Adrenal gland (tissue), 19 donors: ENCODE measurements at regions of chr5 and their contacts with region 1.

Region 1: DNA sequence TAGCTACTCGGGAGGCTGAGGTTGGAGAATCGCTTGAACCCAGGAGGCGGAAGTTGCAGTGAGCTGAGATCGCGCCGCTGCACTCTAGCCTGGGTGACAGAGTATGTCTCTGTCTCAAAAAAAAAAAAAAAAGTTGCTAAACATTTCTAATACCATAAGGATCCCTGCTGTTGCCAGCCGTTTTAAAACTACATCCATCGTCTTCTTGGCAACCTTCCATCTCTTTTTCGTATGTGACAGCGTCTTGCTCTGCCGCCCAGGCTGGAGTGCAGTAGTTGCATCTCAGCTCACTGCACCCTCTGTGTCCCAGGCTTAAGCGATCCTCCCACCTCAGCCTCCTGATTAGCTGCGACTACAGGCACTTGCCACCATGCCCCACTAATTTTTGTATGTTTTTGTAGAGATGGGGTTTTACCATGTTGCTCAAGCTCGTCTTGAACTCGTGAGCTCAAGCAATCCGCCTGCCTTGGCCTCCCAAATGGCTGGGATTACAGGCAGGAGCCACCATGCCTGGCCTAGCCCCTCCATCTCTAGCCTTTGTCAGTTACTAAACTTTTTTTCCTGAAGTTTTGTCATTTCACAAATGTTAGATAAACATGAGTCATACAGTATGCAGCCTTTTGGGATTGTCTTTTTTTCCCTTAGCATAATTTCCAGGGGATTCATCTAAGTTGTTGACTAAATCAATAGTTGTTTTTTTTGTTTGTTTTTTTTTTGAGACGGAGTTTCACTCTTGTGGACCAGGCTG is 13.5 kb downstream of the NSD1 start:
- DNase-seq: peak in 1 of 7 donors; percentile 49
- H3K4me3 ChIP-seq: no peak overlapping the region
- H3K27ac ChIP-seq: no peak overlapping the region
- H3K4me1 ChIP-seq: peaks cover 0 to 14% of the 10 kb centered on the region in 2 donors
- H3K27me3 ChIP-seq: no peaks in the 10 kb centered on the region
- CTCF ChIP-seq: no peak
- POLR2A ChIP-seq: no peak

Region 2: GRCh38 chr5:176875783-176876505 is 271.1 kb before region 1 on chr5:
- intact Hi-C with region 1: no loop called
- DNase-seq: no peak
- H3K4me3 ChIP-seq: no peak overlapping the region
- H3K27ac ChIP-seq: no peak overlapping the region
- H3K4me1 ChIP-seq: no peaks in the 10 kb centered on the region
- H3K27me3 ChIP-seq: peaks cover 4% of the 10 kb centered on the region
- CTCF ChIP-seq: no peak
- POLR2A ChIP-seq: no peak

Region 3: GRCh38 chr5:177232761-177233160 is 85.7 kb after region 1 on chr5:
- intact Hi-C with region 1: no loop called
- DNase-seq: no peak
- H3K4me3 ChIP-seq: no peak overlapping the region
- H3K27ac ChIP-seq: no peak overlapping the region
- H3K4me1 ChIP-seq: peaks cover 0 to 35% of the 10 kb centered on the region in 2 donors
- H3K27me3 ChIP-seq: no peaks in the 10 kb centered on the region
- CTCF ChIP-seq: no peak
- POLR2A ChIP-seq: no peak

Region 4: DNA sequence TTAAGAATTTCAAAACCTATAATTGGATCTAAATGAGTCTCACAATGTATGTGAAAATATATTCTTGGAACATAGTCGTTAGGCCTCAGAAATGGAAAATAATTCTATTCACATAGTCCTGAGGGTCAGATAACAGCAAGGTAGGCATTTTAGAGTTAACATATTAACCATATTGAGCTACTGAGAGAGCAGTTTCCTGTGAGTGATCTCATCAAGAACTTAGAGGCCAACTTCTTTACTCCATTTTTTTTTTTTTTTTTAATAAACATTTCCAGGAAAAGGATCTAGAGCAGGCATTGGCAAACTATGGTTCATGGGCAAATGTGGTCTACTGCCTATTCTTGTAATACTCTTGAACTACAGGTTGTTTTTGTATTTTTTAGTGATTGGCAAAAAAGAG is 129.8 kb after region 1 on chr5:
- intact Hi-C with region 1: loop called in 1 of 2 experiments (anchors 10 kb)
- DNase-seq: no peak
- H3K4me3 ChIP-seq: no peak overlapping the region
- H3K27ac ChIP-seq: peak overlapping the region in 1 of 5 donors; percentile 11
- H3K4me1 ChIP-seq: peaks cover 0 to 12% of the 10 kb centered on the region in 2 donors
- H3K27me3 ChIP-seq: no peaks in the 10 kb centered on the region
- CTCF ChIP-seq: no peak
- POLR2A ChIP-seq: no peak